ENCODE measurements at regions of chr18 and their contacts with region 1.

Region 1: DNA sequence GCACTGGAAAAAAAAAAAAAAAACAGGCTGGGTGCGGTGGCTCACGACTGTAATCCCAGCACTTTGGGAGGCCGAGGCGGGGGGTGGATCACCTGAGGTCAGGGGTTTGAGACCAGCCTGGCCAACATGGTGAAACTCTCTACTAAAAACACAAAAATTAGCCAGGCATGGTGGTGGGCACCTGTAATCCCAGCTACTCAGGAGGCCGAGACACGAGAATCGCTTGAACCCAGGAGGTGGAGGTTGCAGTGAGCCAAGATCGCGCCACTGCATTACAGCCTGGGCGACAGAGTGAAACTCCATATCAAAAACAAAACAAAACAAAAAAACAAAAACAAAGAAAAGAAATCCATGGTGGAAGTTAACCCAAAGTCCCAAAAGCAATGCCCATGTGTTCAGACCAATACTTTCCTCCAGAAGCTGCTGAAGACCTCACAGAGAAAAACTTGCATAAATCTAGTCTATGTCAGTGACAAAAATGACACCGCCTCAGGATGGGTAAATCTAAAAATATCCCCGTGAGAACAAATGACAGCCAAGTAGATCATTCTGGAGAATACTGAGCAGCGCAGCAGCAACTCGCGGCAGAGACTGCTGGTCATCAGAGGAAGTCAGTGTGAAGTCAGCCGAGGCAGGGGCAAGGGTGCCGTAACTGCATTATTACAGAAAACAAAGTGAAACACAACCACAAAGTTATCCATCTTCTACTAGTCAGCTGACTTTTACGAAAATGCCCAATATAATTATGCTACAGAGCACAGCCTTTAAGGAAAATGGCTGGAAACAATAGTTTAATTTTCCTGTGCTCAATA is 41.0 kb downstream of the LPIN2 start:
- DNase-seq: peak; percentile 51 to 87 (median 58)
- H3K4me3 ChIP-seq: peak overlapping the region; percentile 51
- H3K4me3 Mint-ChIP-seq: peak overlapping the region; percentile 81 to 91 (median 87)
- H3K27ac ChIP-seq: peak overlapping the region; percentile 71
- H3K27ac Mint-ChIP-seq: peak overlapping the region; percentile 96 to 100 (median 98)
- H3K4me1 ChIP-seq: peaks cover 95% of the 10 kb centered on the region
- H3K4me1 Mint-ChIP-seq: peaks cover 80 to 97% (median 95%) of the 10 kb centered on the region in 3 donors
- H3K27me3 ChIP-seq: no peaks in the 10 kb centered on the region
- H3K27me3 Mint-ChIP-seq: no peaks in the 10 kb centered on the region

Region 2: GRCh38 chr18:2883076-2883735 is 88.7 kb before region 1 on chr18:
- CTCF ChIA-PET with region 1: no interaction called
- POLR2A ChIA-PET with region 1: no interaction called
- DNase-seq: peak in 4 of 5 donors; percentile 24 to 59 (median 42)
- H3K4me3 ChIP-seq: peak overlapping the region; percentile 38
- H3K4me3 Mint-ChIP-seq: peak overlapping the region; percentile 2 to 85 (median 75)
- H3K27ac ChIP-seq: no peak overlapping the region
- H3K27ac Mint-ChIP-seq: peak overlapping the region; percentile 85 to 96 (median 92)
- H3K4me1 ChIP-seq: peaks cover 35% of the 10 kb centered on the region
- H3K4me1 Mint-ChIP-seq: peaks cover 25 to 41% (median 35%) of the 10 kb centered on the region in 3 donors
- H3K27me3 ChIP-seq: no peaks in the 10 kb centered on the region
- H3K27me3 Mint-ChIP-seq: peaks cover 0 to 1% of the 10 kb centered on the region in 2 donors

Region 3: DNA sequence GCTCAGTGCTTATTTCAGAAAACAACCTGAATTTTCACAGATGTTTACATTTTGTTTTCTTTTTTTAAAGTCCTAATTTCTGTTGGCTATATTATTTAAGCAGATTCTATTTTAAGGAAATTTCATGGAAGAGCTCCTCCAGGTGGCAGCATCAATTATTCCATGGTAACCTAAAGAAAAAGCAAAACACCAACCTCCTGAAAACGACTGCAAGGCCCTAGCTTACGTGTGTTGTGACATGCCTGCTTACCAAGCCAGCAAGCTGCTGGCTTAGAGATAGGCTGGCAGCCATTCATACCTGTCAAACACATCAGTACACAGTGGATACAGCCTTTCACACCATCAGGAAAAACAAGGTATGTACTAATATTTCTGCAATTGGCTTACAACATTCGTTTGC is 23.9 kb before region 1 on chr18:
- CTCF ChIA-PET with region 1: interaction called, 17 read pairs
- POLR2A ChIA-PET with region 1: no interaction called
- DNase-seq: no peak
- H3K4me3 ChIP-seq: no peak overlapping the region
- H3K4me3 Mint-ChIP-seq: no peak overlapping the region
- H3K27ac ChIP-seq: no peak overlapping the region
- H3K27ac Mint-ChIP-seq: peak overlapping the region in 3 of 8 donors; percentile 15 to 87 (median 26)
- H3K4me1 ChIP-seq: peaks cover 13% of the 10 kb centered on the region
- H3K4me1 Mint-ChIP-seq: peaks cover 51 to 79% (median 70%) of the 10 kb centered on the region in 3 donors
- H3K27me3 ChIP-seq: no peaks in the 10 kb centered on the region
- H3K27me3 Mint-ChIP-seq: no peaks in the 10 kb centered on the region

Region 4: DNA sequence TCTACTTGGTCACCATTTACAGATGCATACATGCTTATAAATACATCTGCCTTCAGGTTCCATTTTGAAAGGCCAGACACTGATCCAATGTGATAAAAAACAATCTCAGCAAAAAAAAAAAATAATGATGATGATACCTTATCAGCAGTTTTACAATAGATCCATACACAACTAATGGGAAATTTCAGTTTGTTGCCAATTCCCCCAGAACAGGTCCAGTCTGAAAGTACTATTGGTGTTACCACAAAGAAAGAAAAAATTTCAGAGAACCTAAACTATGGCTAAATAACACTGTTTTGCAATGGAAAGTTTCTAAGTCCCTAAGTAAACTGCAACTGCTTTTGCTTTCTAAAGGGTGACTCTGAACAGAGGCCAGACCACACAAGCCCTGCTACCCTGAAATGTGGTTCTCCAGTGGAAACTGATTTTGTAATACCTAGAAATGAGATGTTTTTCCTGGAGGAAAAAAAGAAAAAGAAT is 13.1 kb before region 1 on chr18:
- CTCF ChIA-PET with region 1: interaction called, 75 read pairs
- POLR2A ChIA-PET with region 1: interaction called, 50 read pairs
- DNase-seq: peak in 3 of 5 donors; percentile 18 to 63 (median 23)
- H3K4me3 ChIP-seq: peak overlapping the region; percentile 12
- H3K4me3 Mint-ChIP-seq: peak overlapping the region; percentile 59 to 91 (median 80)
- H3K27ac ChIP-seq: peak overlapping the region; percentile 12
- H3K27ac Mint-ChIP-seq: peak overlapping the region; percentile 94 to 99 (median 96)
- H3K4me1 ChIP-seq: peaks cover 93% of the 10 kb centered on the region
- H3K4me1 Mint-ChIP-seq: peaks cover 88 to 95% (median 95%) of the 10 kb centered on the region in 3 donors
- H3K27me3 ChIP-seq: no peaks in the 10 kb centered on the region
- H3K27me3 Mint-ChIP-seq: no peaks in the 10 kb centered on the region

Measured in CD8-positive, alpha-beta memory T cell (primary cell).